Naive thymus-derived CD4-positive, alpha-beta T cell (primary cell): ENCODE measurements at regions of chr16 and their contacts with region 1.

Region 1: GRCh38 chr16:56608043-56608875 is at the start of gene MT2A:
- DNase-seq: peak; percentile 70 to 89 (median 84)
- ATAC-seq: peak; percentile 88
- H3K4me3 ChIP-seq: peak within 1 kb of the TSS; percentile 97
- H3K4me3 Mint-ChIP-seq: peak within 1 kb of the TSS; percentile 85 to 100 (median 96)
- H3K27ac ChIP-seq: peak within 1 kb of the TSS; percentile 94
- H3K27ac Mint-ChIP-seq: peak within 1 kb of the TSS; percentile 85 to 99 (median 93)
- H3K4me1 ChIP-seq: peaks cover 29 to 34% of the 10 kb centered on the region in 2 donors
- H3K4me1 Mint-ChIP-seq: peaks cover 35 to 52% (median 47%) of the 10 kb centered on the region in 7 donors
- H3K27me3 ChIP-seq: no peaks in the 10 kb centered on the region
- H3K27me3 Mint-ChIP-seq: no peaks in the 10 kb centered on the region
- total RNA-seq, gene MT2A: 15.0 to 435 (median 32.8) TPM

Region 2: GRCh38 chr16:56425439-56425832 is 182.8 kb before region 1 on chr16 and contains the start of gene AMFR:
- CTCF ChIA-PET with region 1: no interaction called
- POLR2A ChIA-PET with region 1: no interaction called
- intact Hi-C with region 1: loop called in 1 of 2 experiments (anchors 5 kb)
- DNase-seq: peak; percentile 57 to 86 (median 68)
- ATAC-seq: peak; percentile 97
- H3K4me3 ChIP-seq: peak within 1 kb of the TSS; percentile 73
- H3K4me3 Mint-ChIP-seq: peak within 1 kb of the TSS; percentile 95 to 100 (median 98)
- H3K27ac ChIP-seq: peak within 1 kb of the TSS; percentile 82
- H3K27ac Mint-ChIP-seq: peak within 1 kb of the TSS; percentile 74 to 96 (median 94)
- H3K4me1 ChIP-seq: peaks cover 6 to 8% of the 10 kb centered on the region in 2 donors
- H3K4me1 Mint-ChIP-seq: peaks cover 32 to 45% (median 40%) of the 10 kb centered on the region in 7 donors
- H3K27me3 ChIP-seq: no peaks in the 10 kb centered on the region
- H3K27me3 Mint-ChIP-seq: no peaks in the 10 kb centered on the region
- total RNA-seq, gene AMFR: 45.5 to 83.3 (median 62.0) TPM

Region 3: GRCh38 chr16:56519459-56520250 is 88.6 kb before region 1 on chr16 and contains the start of gene BBS2:
- CTCF ChIA-PET with region 1: no interaction called
- POLR2A ChIA-PET with region 1: interaction called, 3 read pairs
- intact Hi-C with region 1: loop called in 1 of 2 experiments (anchors 1 kb)
- DNase-seq: peak; percentile 84 to 93 (median 92)
- ATAC-seq: peak; percentile 89
- H3K4me3 ChIP-seq: peak within 1 kb of the TSS; percentile 99
- H3K4me3 Mint-ChIP-seq: peak within 1 kb of the TSS; percentile 82 to 91 (median 86)
- H3K27ac ChIP-seq: peak within 1 kb of the TSS; percentile 92
- H3K27ac Mint-ChIP-seq: peak within 1 kb of the TSS; percentile 60 to 95 (median 90)
- H3K4me1 ChIP-seq: peaks cover 8 to 26% of the 10 kb centered on the region in 2 donors
- H3K4me1 Mint-ChIP-seq: peaks cover 11 to 62% (median 52%) of the 10 kb centered on the region in 7 donors
- H3K27me3 ChIP-seq: no peaks in the 10 kb centered on the region
- H3K27me3 Mint-ChIP-seq: no peaks in the 10 kb centered on the region
- total RNA-seq, gene BBS2: 14.7 to 130 (median 84.0) TPM

Region 4: GRCh38 chr16:56625140-56625942 is 17.1 kb after region 1 on chr16 and contains the start of gene MT1E:
- CTCF ChIA-PET with region 1: interaction called, 5 read pairs
- POLR2A ChIA-PET with region 1: interaction called, 4 read pairs
- intact Hi-C with region 1: loop called (anchors 1 kb)
- DNase-seq: peak in 7 of 9 donors; percentile 19 to 76 (median 41)
- ATAC-seq: peak; percentile 89
- H3K4me3 ChIP-seq: peak within 1 kb of the TSS; percentile 54
- H3K4me3 Mint-ChIP-seq: peak within 1 kb of the TSS; percentile 76 to 98 (median 90)
- H3K27ac ChIP-seq: peak within 1 kb of the TSS; percentile 15
- H3K27ac Mint-ChIP-seq: peak within 1 kb of the TSS; percentile 61 to 95 (median 82)
- H3K4me1 ChIP-seq: peaks cover 0 to 13% of the 10 kb centered on the region in 2 donors
- H3K4me1 Mint-ChIP-seq: peaks cover 11 to 27% (median 15%) of the 10 kb centered on the region in 7 donors
- H3K27me3 ChIP-seq: no peaks in the 10 kb centered on the region
- H3K27me3 Mint-ChIP-seq: peaks cover 6 to 13% (median 12%) of the 10 kb centered on the region in 5 donors
- total RNA-seq, gene MT1E: 0.45 to 166 (median 2.5) TPM in 4 of 5 experiments, not detected in the other

Region 5: DNA sequence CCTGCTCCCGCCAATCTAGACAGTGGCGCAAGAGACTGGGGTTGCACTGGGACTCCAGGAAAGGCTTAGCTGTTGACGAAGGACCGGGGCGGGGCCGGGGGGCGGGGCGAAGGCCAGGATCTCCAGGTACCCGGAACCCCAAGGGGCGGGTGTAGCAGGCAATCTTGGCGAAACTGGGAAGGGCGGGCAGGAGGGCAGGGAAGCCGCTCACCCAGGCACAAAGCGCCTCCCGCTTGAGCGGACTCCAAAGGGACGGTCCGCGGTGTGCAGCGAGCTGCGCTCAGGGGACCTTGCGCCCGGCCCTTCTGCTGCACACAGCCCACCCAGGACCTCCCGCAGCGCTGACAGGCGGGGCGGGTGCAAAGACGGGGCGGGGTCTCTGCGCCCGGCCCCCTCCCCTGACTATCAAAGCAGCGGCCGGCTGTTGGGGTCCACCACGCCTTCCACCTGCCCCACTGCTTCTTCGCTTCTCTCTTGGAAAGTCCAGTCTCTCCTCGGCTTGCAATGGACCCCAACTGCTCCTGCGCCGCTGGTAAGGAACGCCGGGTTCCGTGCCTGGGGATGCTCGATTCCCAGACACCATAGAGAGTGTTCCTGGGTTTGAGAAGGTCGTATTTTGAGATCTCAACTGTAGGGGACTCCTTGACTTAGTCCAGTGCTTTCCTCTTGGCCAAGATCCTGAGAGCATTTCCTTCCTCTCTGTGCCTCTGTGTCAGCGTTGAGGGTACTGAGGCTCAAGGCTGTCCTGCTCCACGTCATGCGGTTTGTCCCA is 49.5 kb after region 1 on chr16 and contains the start of gene MT1F:
- CTCF ChIA-PET with region 1: interaction called, 3 read pairs
- POLR2A ChIA-PET with region 1: interaction called, 23 read pairs
- intact Hi-C with region 1: loop called (anchors 1 to 2 kb)
- DNase-seq: peak in 8 of 9 donors; percentile 35 to 66 (median 56)
- ATAC-seq: peak; percentile 80
- H3K4me3 ChIP-seq: peak within 1 kb of the TSS; percentile 91
- H3K4me3 Mint-ChIP-seq: peak within 1 kb of the TSS; percentile 79 to 99 (median 94)
- H3K27ac ChIP-seq: peak within 1 kb of the TSS; percentile 64
- H3K27ac Mint-ChIP-seq: peak within 1 kb of the TSS; percentile 67 to 97 (median 94)
- H3K4me1 ChIP-seq: peaks cover 7 to 12% of the 10 kb centered on the region in 2 donors
- H3K4me1 Mint-ChIP-seq: peaks cover 14 to 46% (median 27%) of the 10 kb centered on the region in 7 donors
- H3K27me3 ChIP-seq: no peaks in the 10 kb centered on the region
- H3K27me3 Mint-ChIP-seq: peaks cover 0 to 21% (median 0%) of the 10 kb centered on the region in 5 donors
- total RNA-seq, gene MT1F: 5.6 to 20.6 (median 8.7) TPM

Region 6: GRCh38 chr16:56708525-56709442 is 100.5 kb after region 1 on chr16:
- CTCF ChIA-PET with region 1: interaction called, 8 read pairs
- POLR2A ChIA-PET with region 1: interaction called, 16 read pairs
- intact Hi-C with region 1: no loop called
- DNase-seq: peak in 6 of 9 donors; percentile 35 to 53 (median 47)
- ATAC-seq: peak; percentile 77
- H3K4me3 ChIP-seq: peak overlapping the region; percentile 65
- H3K4me3 Mint-ChIP-seq: peak overlapping the region; percentile 72 to 89 (median 83)
- H3K27ac ChIP-seq: peak overlapping the region; percentile 69
- H3K27ac Mint-ChIP-seq: peak overlapping the region; percentile 80 to 100 (median 89)
- H3K4me1 ChIP-seq: peaks cover 17 to 26% of the 10 kb centered on the region in 2 donors
- H3K4me1 Mint-ChIP-seq: peaks cover 14 to 41% (median 36%) of the 10 kb centered on the region in 7 donors
- H3K27me3 ChIP-seq: no peaks in the 10 kb centered on the region
- H3K27me3 Mint-ChIP-seq: no peaks in the 10 kb centered on the region